Activated B cell treated with CpG ODN at 0.5 μM for 24 hours (primary cell): ENCODE measurements at regions of chr18 and their contacts with region 1.

Region 1: GRCh38 chr18:79465392-79465991 is 69.8 kb downstream of the NFATC1 start:
- DNase-seq: peak; percentile 69
- ATAC-seq: peak; percentile 80
- H3K4me3 Mint-ChIP-seq: peak overlapping the region; percentile 92
- H3K27ac Mint-ChIP-seq: peak overlapping the region; percentile 97
- H3K4me1 Mint-ChIP-seq: peaks cover 77% of the 10 kb centered on the region
- H3K27me3 Mint-ChIP-seq: no peaks in the 10 kb centered on the region
- CTCF ChIP-seq: no peak

Region 2: DNA sequence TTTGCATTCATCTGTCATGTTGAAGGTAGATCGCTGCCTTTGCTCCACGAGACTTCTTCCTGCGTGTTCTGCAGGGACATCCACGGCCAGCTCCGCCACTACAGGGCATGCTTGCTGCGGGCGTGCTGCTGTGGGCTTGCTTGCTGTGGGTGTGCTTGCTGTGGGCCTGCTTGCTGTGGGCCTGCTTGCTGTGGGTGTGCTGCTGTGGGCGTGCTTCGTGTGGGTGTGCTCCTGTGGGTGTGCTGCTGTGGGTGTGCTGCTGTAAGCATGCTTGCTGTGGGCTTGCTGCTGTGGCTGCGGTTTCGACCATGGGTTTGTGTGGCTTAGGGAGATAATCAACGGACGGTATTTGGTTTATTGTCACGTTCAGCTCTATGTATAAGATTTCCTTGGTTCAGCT is 231.1 kb before region 1 on chr18:
- CTCF ChIA-PET with region 1: no interaction called
- POLR2A ChIA-PET with region 1: no interaction called
- intact Hi-C with region 1: no loop called
- DNase-seq: no peak
- ATAC-seq: no peak
- H3K4me3 Mint-ChIP-seq: no peak overlapping the region
- H3K27ac Mint-ChIP-seq: no peak overlapping the region
- H3K4me1 Mint-ChIP-seq: no peaks in the 10 kb centered on the region
- H3K27me3 Mint-ChIP-seq: no peaks in the 10 kb centered on the region
- CTCF ChIP-seq: no peak

Region 3: GRCh38 chr18:79393635-79394533 is 71.6 kb before region 1 on chr18:
- CTCF ChIA-PET with region 1: interaction called, 10 read pairs
- POLR2A ChIA-PET with region 1: interaction called, 10 read pairs
- intact Hi-C with region 1: loop called (anchors 1 kb)
- DNase-seq: peak; percentile 52
- ATAC-seq: peak; percentile 13
- H3K4me3 Mint-ChIP-seq: peak overlapping the region; percentile 84
- H3K27ac Mint-ChIP-seq: peak overlapping the region; percentile 71
- H3K4me1 Mint-ChIP-seq: peaks cover 35% of the 10 kb centered on the region
- H3K27me3 Mint-ChIP-seq: no peaks in the 10 kb centered on the region
- CTCF ChIP-seq: no peak

Region 4: GRCh38 chr18:79439201-79440023 is 26.1 kb before region 1 on chr18:
- CTCF ChIA-PET with region 1: interaction called, 3 read pairs
- POLR2A ChIA-PET with region 1: interaction called, 11 read pairs
- intact Hi-C with region 1: loop called (anchors 1 kb)
- DNase-seq: no peak
- ATAC-seq: no peak
- H3K4me3 Mint-ChIP-seq: peak overlapping the region; percentile 35
- H3K27ac Mint-ChIP-seq: peak overlapping the region; percentile 53
- H3K4me1 Mint-ChIP-seq: peaks cover 82% of the 10 kb centered on the region
- H3K27me3 Mint-ChIP-seq: no peaks in the 10 kb centered on the region
- CTCF ChIP-seq: no peak

Region 5: GRCh38 chr18:79507076-79507545 is 41.6 kb after region 1 on chr18:
- CTCF ChIA-PET with region 1: interaction called, 3 read pairs
- POLR2A ChIA-PET with region 1: interaction called, 44 read pairs
- intact Hi-C with region 1: loop called (anchors 1 kb)
- DNase-seq: peak; percentile 48
- ATAC-seq: peak; percentile 47
- H3K4me3 Mint-ChIP-seq: peak overlapping the region; percentile 70
- H3K27ac Mint-ChIP-seq: peak overlapping the region; percentile 89
- H3K4me1 Mint-ChIP-seq: peaks cover 63% of the 10 kb centered on the region
- H3K27me3 Mint-ChIP-seq: no peaks in the 10 kb centered on the region
- CTCF ChIP-seq: no peak

Region 6: GRCh38 chr18:79644006-79644665 is 178.6 kb after region 1 on chr18:
- CTCF ChIA-PET with region 1: no interaction called
- POLR2A ChIA-PET with region 1: no interaction called
- intact Hi-C with region 1: loop called (anchors 5 kb)
- DNase-seq: peak; percentile 68
- ATAC-seq: peak; percentile 93
- H3K4me3 Mint-ChIP-seq: no peak overlapping the region
- H3K27ac Mint-ChIP-seq: no peak overlapping the region
- H3K4me1 Mint-ChIP-seq: peaks cover 24% of the 10 kb centered on the region
- H3K27me3 Mint-ChIP-seq: no peaks in the 10 kb centered on the region
- CTCF ChIP-seq: peak; percentile 97